ENCODE measurements at regions of chr2 and their contacts with region 1.

Region 1: GRCh38 chr2:230987137-230988020 is 8.5 kb upstream of the SPATA3 start:
- DNase-seq: peak; percentile 80 to 86
- H3K4me3 ChIP-seq: peak overlapping the region; percentile 39
- H3K4me3 Mint-ChIP-seq: peak overlapping the region; percentile 64
- H3K27ac Mint-ChIP-seq: peak overlapping the region; percentile 42
- H3K4me1 ChIP-seq: peaks cover 3% of the 10 kb centered on the region; the same call in 1 of the 2 replicates
- H3K4me1 Mint-ChIP-seq: peaks cover 6% of the 10 kb centered on the region
- H3K27me3 ChIP-seq: no peaks in the 10 kb centered on the region
- H3K27me3 Mint-ChIP-seq: no peaks in the 10 kb centered on the region
- CTCF ChIP-seq: peak; percentile 48 to 83

Region 2: GRCh38 chr2:230758566-230759480 is 228.6 kb before region 1 on chr2:
- CTCF ChIA-PET with region 1: no interaction called
- POLR2A ChIA-PET with region 1: no interaction called
- intact Hi-C with region 1: no loop called
- DNase-seq: no peak
- H3K4me3 ChIP-seq: no peak overlapping the region
- H3K4me3 Mint-ChIP-seq: no peak overlapping the region
- H3K27ac Mint-ChIP-seq: no peak overlapping the region
- H3K4me1 ChIP-seq: peaks cover 20% of the 10 kb centered on the region
- H3K4me1 Mint-ChIP-seq: peaks cover 9% of the 10 kb centered on the region
- H3K27me3 ChIP-seq: no peaks in the 10 kb centered on the region
- H3K27me3 Mint-ChIP-seq: no peaks in the 10 kb centered on the region
- CTCF ChIP-seq: no peak

Region 3: DNA sequence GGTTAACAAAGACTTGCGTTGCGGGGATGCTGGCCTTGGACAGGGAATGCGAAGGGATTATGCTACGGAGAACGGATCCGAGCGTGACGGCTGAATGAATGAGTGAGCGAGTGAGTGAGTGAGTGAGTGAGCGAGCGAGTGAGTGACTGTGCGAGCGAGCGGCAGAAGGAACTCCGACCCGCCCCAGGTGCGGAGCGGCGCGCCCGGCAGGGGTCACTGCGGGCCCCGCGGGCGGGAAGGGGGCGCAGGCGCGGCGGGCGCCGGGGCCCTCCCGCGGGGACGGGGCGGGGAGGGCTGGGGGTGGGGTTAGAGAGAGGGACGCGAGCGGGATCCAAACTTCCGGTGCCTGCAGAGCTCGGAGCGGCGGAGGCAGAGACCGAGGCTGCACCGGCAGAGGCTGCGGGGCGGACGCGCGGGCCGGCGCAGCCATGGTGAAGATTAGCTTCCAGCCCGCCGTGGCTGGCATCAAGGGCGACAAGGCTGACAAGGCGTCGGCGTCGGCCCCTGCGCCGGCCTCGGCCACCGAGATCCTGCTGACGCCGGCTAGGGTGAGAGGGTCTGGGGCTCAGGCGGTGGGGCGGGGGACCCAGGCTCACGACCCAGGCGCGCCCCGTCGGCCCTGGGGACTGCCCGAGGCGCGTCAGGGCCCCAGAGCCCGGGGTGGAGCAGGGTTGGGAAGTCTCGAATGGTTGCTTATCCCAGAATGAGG is 122.6 kb before region 1 on chr2 and contains the start of gene ITM2C:
- CTCF ChIA-PET with region 1: no interaction called
- POLR2A ChIA-PET with region 1: no interaction called
- intact Hi-C with region 1: loop called (anchors 1 kb)
- DNase-seq: peak; percentile 77 to 81
- H3K4me3 ChIP-seq: peak within 1 kb of the TSS; percentile 71
- H3K4me3 Mint-ChIP-seq: peak within 1 kb of the TSS; percentile 92
- H3K27ac Mint-ChIP-seq: peak within 1 kb of the TSS; percentile 68
- H3K4me1 ChIP-seq: peaks cover 21% of the 10 kb centered on the region
- H3K4me1 Mint-ChIP-seq: peaks cover 7% of the 10 kb centered on the region
- H3K27me3 ChIP-seq: no peaks in the 10 kb centered on the region
- H3K27me3 Mint-ChIP-seq: no peaks in the 10 kb centered on the region
- CTCF ChIP-seq: peak; percentile 40 to 46
- total RNA-seq, gene ITM2C: 135 and 136 TPM in 2 replicates

Region 4: DNA sequence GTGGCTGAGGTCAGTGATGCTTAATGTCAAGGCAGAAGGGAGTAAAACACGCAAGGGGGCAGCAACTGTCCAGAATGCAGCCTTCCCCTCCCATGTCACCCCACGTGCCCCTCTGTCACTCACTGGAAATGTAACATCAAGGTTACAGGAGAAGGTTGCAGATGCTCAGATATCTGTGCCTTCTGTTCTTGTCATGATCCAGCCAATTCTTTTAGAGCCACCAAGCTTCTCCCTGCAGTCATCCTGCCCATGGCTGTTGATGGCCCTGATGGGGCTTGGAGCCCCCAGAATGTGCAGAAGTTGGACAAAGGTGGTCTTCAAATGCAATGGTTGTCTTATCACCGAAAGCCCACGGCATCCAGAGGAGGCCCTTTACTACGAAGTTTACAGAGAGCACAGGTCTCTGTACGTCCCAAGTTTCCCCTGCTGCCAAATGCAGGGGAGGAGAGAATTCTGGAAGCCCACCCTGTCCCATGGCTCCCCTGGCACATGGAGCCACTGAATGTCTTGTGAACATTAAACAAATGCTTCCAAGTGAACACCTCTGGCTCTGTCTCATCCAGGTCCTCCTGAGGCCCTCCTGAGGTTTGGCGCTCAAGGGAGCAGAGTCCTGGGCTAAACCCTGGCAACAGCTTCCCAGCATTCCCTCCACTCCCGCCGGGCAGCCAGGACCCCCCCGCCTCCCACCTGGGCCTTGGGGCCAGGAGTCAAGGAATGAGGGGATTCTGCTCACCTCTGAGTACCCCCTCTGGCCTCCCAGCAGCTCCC is 57.8 kb before region 1 on chr2:
- CTCF ChIA-PET with region 1: interaction called, 4 read pairs
- POLR2A ChIA-PET with region 1: no interaction called
- intact Hi-C with region 1: loop called (anchors 1 kb)
- DNase-seq: no peak
- H3K4me3 ChIP-seq: no peak overlapping the region
- H3K4me3 Mint-ChIP-seq: no peak overlapping the region
- H3K27ac Mint-ChIP-seq: no peak overlapping the region
- H3K4me1 ChIP-seq: no peaks in the 10 kb centered on the region
- H3K4me1 Mint-ChIP-seq: no peaks in the 10 kb centered on the region
- H3K27me3 ChIP-seq: no peaks in the 10 kb centered on the region
- H3K27me3 Mint-ChIP-seq: no peaks in the 10 kb centered on the region
- CTCF ChIP-seq: no peak

Region 5: DNA sequence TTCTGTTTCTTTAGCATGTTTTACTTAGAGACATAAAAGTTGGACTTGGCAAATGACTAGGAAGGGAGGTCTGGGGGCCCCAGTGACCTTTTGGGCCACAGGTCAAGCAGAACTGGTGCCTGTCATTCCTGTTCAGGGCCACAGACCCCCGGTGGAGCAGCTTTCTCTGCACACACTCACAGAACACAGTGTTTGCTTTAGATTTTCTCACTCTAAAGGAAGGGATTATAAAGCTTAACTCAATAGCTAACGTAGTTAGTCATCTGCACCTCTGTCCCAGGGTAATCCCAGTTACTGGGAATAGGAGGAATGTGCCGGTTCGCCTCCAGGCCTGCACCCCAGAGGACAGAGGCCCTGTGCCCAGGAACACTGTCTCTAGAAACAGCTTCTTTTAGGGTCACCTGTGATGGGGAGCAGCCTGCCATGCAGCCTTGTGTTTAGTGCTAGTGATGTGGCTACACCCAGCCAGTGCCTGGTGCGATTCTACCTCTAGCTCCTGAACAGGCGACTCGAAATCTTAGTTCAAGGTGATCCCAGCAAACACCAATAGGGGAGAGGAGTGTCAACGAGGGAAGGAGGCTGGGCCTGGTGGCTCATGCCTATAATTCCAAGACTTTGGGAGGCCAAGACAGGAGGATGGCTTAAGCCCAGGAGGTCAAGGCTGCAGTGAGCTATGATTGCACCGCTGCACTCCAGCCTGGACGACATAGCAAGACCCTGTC is 20.1 kb after region 1 on chr2:
- CTCF ChIA-PET with region 1: interaction called, 7 read pairs
- POLR2A ChIA-PET with region 1: no interaction called
- intact Hi-C with region 1: loop called (anchors 1 kb)
- DNase-seq: peak; percentile 91 to 93
- H3K4me3 ChIP-seq: no peak overlapping the region
- H3K4me3 Mint-ChIP-seq: peak overlapping the region; percentile 58
- H3K27ac Mint-ChIP-seq: peak overlapping the region; percentile 97
- H3K4me1 ChIP-seq: peaks cover 52% of the 10 kb centered on the region
- H3K4me1 Mint-ChIP-seq: peaks cover 38% of the 10 kb centered on the region
- H3K27me3 ChIP-seq: no peaks in the 10 kb centered on the region
- H3K27me3 Mint-ChIP-seq: no peaks in the 10 kb centered on the region
- CTCF ChIP-seq: no peak

Measured in Caco-2 (cell line).